CD4-positive, alpha-beta memory T cell (primary cell): ENCODE measurements at regions of chr19 and their contacts with region 1.

Region 1: DNA sequence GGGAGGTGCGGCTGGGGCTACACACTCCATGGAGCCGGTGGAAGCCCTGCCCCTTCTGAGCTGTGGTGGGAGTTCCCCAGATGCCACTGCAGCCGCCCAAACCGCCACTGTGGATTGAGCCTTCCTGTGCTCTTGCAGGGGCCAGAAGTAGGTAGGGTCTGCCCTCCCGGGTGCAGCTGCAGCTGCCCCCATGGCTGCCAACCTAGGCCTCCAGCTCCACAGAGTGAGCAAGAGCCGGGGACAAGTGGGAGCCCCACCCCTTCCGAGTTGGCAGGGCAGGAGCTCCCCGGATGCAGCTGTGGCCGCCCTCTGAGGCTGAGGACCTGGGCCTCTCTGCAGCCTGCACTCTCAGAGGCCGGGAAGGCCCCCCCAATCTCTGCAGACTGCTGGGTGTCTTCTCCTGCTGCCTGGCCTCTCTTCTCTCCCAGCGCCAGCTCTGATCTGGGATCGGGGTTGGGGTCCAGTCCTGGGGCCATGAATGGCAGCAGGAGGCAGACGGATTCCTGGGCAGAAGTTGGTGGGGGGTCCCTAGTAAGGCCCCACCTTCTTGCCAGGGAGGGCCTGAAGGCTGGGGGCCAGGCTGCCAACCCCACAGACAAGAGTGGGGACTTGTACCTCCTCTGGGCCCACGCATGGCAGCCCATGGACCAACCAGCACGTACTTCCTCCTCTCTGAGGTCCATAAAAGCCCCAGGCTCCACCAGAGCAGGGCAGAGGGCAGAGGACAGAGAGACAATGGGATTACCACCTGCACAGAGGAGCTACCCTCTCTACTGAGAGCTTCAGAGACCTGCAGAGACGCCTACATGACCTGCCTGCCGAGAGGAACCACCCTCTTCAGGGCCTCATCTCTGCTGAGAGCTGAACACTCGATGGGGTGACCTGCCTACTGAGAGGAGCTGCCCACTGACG is 28.9 kb downstream of the AP2S1 start:
- DNase-seq: peak; percentile 48 to 75 (median 52)
- H3K4me3 ChIP-seq: no peak overlapping the region
- H3K4me3 Mint-ChIP-seq: peak overlapping the region in 6 of 8 donors; percentile 20 to 72 (median 56)
- H3K27ac ChIP-seq: peak overlapping the region; percentile 34
- H3K27ac Mint-ChIP-seq: peak overlapping the region; percentile 73 to 95 (median 92)
- H3K4me1 ChIP-seq: peaks cover 29% of the 10 kb centered on the region
- H3K4me1 Mint-ChIP-seq: peaks cover 15 to 43% (median 31%) of the 10 kb centered on the region in 4 donors
- H3K27me3 ChIP-seq: no peaks in the 10 kb centered on the region
- H3K27me3 Mint-ChIP-seq: no peaks in the 10 kb centered on the region

Region 2: GRCh38 chr19:46759817-46760333 is 61.9 kb before region 1 on chr19:
- CTCF ChIA-PET with region 1: interaction called, 19 read pairs
- POLR2A ChIA-PET with region 1: no interaction called
- intact Hi-C with region 1: no loop called
- DNase-seq: no peak
- H3K4me3 ChIP-seq: no peak overlapping the region
- H3K4me3 Mint-ChIP-seq: no peak overlapping the region
- H3K27ac ChIP-seq: no peak overlapping the region
- H3K27ac Mint-ChIP-seq: no peak overlapping the region
- H3K4me1 ChIP-seq: no peaks in the 10 kb centered on the region
- H3K4me1 Mint-ChIP-seq: peaks cover 0 to 5% (median 0%) of the 10 kb centered on the region in 4 donors
- H3K27me3 ChIP-seq: no peaks in the 10 kb centered on the region
- H3K27me3 Mint-ChIP-seq: no peaks in the 10 kb centered on the region

Region 3: DNA sequence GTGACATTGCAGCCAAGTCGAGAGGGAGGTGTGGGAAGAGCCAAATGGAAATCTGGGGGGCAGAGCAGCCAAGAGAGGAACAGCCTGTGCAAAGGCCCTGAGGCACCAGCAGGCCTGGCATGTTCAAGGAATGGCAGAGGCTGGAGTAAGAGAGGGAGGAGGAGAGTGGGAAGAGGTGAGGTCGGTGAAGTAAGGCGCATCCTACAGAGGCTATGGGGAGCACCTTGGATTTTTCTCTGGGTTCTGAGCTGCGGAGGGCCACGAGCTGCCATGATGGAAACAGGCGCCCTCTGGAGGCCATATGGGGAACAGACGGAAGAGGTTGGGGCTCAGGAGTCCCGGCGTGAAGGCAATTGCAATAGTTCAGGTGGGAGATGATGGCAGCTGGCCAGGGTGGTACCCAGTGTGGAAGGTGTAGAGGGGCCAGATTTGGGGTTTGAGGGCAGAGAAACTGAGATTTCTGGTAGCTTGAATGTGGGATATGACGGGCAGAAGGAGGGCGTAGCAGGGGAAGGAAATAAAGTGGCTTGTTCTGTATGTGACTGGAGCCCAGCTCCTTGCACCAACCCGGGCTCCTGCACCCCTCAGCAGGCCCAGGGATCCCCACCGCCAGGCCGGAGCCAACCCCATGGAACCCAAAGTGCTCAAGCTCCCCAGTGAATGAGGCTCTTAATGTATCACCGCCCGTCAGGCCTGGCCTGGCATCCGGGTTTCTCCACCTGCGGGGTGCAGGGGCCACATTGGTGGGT is 55.0 kb before region 1 on chr19:
- CTCF ChIA-PET with region 1: interaction called, 22 read pairs
- POLR2A ChIA-PET with region 1: no interaction called
- intact Hi-C with region 1: no loop called
- DNase-seq: peak; percentile 51 to 66 (median 58)
- H3K4me3 ChIP-seq: no peak overlapping the region
- H3K4me3 Mint-ChIP-seq: peak overlapping the region in 1 of 8 donors; percentile 39
- H3K27ac ChIP-seq: no peak overlapping the region
- H3K27ac Mint-ChIP-seq: peak overlapping the region in 1 of 7 donors; percentile 53
- H3K4me1 ChIP-seq: no peaks in the 10 kb centered on the region
- H3K4me1 Mint-ChIP-seq: peaks cover 2 to 6% (median 5%) of the 10 kb centered on the region in 4 donors
- H3K27me3 ChIP-seq: no peaks in the 10 kb centered on the region
- H3K27me3 Mint-ChIP-seq: no peaks in the 10 kb centered on the region